ENCODE measurements at regions of chr7 and their contacts with region 1.

Region 1: DNA sequence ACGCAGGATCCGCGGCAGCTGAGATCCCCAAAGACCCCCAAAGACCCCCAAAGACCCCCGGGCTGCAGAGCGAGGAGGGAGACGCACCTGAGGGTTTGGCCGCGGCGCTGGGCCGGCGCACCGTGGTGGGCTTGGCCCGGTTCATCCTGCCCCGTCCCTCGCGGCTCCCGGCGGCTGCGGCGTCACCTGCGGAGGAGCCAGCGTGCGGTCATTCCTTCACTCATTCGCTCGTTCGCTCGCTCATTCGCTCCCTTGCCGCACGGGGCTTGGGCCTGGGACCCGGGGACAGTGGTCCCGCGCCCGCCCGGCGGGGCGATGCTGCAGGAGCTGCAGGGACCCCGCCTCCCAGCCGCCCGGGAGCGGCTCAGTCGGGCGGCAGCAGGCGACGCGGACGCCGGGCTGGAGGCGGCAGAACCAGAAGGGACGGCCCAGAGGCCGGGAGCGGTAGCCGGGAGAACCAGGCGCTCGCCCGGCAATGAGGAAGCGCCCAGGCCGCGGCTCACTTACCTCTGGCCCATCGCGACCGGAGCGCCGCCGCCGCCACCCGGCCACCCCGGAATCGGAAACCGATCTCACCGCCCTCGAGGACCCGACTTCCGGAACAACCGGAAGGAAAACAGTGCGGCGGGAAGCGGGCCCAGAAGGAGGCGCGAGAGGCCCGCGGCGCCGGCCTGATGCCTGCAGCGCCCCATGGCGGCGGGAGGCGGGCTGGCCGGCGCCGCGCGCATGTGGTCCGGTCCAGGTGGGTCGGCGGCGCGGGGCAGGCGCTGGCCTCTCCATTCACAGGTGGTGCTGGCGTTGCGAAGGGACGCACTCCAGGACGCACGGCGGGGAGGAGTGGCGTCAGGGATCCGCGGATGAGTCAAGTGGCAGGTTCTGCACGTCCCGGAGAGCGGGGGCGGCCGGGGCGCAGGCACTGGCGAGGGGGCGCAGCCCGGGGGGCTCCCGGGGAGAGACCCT is at the start of gene INTS1:
- DNase-seq: peak; percentile 96
- H3K4me3 ChIP-seq: peak within 1 kb of the TSS; percentile 100
- H3K27ac ChIP-seq: peak within 1 kb of the TSS; percentile 84
- H3K4me1 ChIP-seq: peaks cover 5% of the 10 kb centered on the region
- H3K27me3 ChIP-seq: no peaks in the 10 kb centered on the region
- CTCF ChIP-seq: peak; percentile 70
- total RNA-seq, gene INTS1: 129 and 141 TPM in 2 replicates

Region 2: GRCh38 chr7:1444925-1445322 is 59.2 kb before region 1 on chr7:
- CTCF ChIA-PET with region 1: no interaction called
- POLR2A ChIA-PET with region 1: interaction called, 10 read pairs
- intact Hi-C with region 1: no loop called
- DNase-seq: no peak
- H3K4me3 ChIP-seq: no peak overlapping the region
- H3K27ac ChIP-seq: no peak overlapping the region
- H3K4me1 ChIP-seq: no peaks in the 10 kb centered on the region
- H3K27me3 ChIP-seq: no peaks in the 10 kb centered on the region
- CTCF ChIP-seq: no peak

Region 3: DNA sequence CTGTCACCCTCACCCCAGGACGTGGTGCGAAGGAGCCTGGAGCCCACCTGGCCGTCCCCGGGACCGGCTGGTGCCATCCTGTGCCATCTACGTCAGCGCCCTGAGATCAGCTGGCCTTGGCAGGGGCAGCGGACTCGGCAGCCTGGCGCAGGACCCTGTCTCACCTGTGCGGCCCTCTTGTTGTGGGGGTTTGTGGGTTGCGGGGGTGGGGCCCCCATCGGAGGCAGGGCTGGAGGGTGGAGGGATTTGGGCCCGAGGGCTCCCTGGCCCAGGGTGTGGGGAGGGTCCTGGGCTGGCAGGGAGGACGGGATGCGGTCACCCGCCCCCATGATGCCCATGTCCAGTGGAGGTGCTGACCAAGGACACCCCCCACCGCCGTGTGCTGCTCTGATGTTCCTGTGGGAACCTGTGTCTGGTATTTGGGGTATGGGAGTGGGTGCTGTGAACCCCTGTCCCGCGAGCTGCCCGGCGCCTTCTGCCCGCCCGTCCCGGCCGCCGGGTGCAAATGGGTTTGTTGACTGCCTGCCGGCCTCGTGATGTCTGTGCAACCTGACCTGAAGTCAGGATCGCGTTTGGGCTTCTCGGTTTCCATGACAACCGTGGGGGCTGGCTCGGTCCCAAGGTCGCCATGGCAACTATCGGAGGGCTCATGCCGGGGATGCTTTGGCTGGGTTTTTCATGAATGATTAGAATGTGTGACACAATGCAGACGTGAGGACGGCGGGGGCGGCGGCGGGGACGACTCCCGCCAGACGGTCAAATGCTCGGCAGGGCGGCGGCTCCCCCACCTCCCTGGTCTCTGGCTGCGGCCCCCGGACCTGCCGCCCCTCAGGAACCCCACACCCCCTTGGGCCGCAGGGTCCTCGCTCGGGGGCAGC is 33.7 kb after region 1 on chr7:
- CTCF ChIA-PET with region 1: no interaction called
- POLR2A ChIA-PET with region 1: no interaction called
- intact Hi-C with region 1: no loop called
- DNase-seq: peak; percentile 83
- H3K4me3 ChIP-seq: peak overlapping the region; percentile 29
- H3K27ac ChIP-seq: peak overlapping the region; percentile 86
- H3K4me1 ChIP-seq: peaks cover 28% of the 10 kb centered on the region
- H3K27me3 ChIP-seq: no peaks in the 10 kb centered on the region
- CTCF ChIP-seq: no peak

Measured in A673 (cell line).